HepG2 (cell line): ENCODE measurements at regions of chr6 and their contacts with region 1.

Region 1: GRCh38 chr6:70221025-70221714 is 81.7 kb downstream of the COL9A1 start:
- DNase-seq: peak; percentile 12
- ATAC-seq: peak; percentile 84
- H3K4me3 ChIP-seq: peak overlapping the region in 1 of 3 experiments; percentile 10; a peak in 1 of 6 replicates
- H3K27ac ChIP-seq: no peak overlapping the region
- H3K4me1 ChIP-seq: peaks cover 16% of the 10 kb centered on the region
- H3K27me3 ChIP-seq: peaks cover 0 to 4% of the 10 kb centered on the region in 2 experiments; a peak in 1 of 5 replicates
- CTCF ChIP-seq: peak; percentile 66
- EP300 ChIP-seq: no peak
- POLR2A ChIP-seq: no peak
- RAD21 ChIP-seq: 0 out of 2 replicates have a peak, but pooled peaks have one; percentile 35

Region 2: GRCh38 chr6:70246110-70246509 is 24.9 kb after region 1 on chr6:
- CTCF ChIA-PET with region 1: no interaction called
- POLR2A ChIA-PET with region 1: no interaction called
- in situ Hi-C with region 1: no loop called
- intact Hi-C with region 1: no loop called
- DNase-seq: no peak
- ATAC-seq: no peak
- H3K4me3 ChIP-seq: no peak overlapping the region
- H3K27ac ChIP-seq: no peak overlapping the region
- H3K4me1 ChIP-seq: peaks cover 15% of the 10 kb centered on the region
- H3K27me3 ChIP-seq: 0 out of 5 replicates have a peak, but pooled peaks cover 0 to 8% of the 10 kb centered on the region in 2 experiments
- CTCF ChIP-seq: no peak
- EP300 ChIP-seq: no peak
- POLR2A ChIP-seq: no peak
- RAD21 ChIP-seq: no peak

Region 3: GRCh38 chr6:70289299-70289698 is 68.1 kb after region 1 on chr6:
- CTCF ChIA-PET with region 1: interaction called, 4 read pairs
- POLR2A ChIA-PET with region 1: no interaction called
- in situ Hi-C with region 1: loop called (anchors 5 kb)
- intact Hi-C with region 1: loop called (anchors 1 kb)
- DNase-seq: peak; percentile 14
- ATAC-seq: peak; percentile 63
- H3K4me3 ChIP-seq: no peak overlapping the region
- H3K27ac ChIP-seq: no peak overlapping the region
- H3K4me1 ChIP-seq: no peaks in the 10 kb centered on the region
- H3K27me3 ChIP-seq: peaks cover 2 to 3% of the 10 kb centered on the region in 2 experiments; a peak in 3 of 5 replicates
- CTCF ChIP-seq: 0 out of 2 replicates have a peak, but pooled peaks have one; percentile 15
- EP300 ChIP-seq: no peak
- POLR2A ChIP-seq: no peak
- RAD21 ChIP-seq: no peak

Region 4: DNA sequence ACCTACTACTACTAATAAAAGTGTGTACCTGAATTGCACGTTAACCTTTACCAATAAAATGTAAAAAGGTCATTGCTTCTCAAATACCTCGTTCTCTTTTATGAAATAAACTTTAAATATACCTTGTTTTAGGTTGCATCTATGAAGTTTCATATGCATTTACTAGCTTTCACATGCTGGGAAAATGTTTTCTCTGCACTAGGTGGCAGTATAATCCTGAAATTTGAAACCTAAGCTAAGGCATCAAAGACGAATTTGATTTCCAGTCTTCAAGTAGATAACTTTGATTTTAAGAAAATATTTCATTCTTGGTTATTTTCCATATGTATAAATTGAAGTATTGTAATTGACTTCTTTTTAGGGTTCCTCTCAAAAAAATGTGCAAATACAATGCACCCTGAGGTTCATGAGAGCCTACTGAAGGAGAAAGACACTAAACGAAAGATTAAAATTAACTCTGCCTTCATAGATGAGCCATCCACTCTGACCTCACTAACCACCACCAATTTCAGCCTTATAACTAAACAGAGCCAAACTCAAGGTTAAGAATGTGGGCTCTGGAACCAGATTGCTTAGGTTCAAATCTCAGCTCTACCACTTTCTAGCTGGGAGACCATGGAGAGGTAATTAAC is 89.0 kb after region 1 on chr6:
- CTCF ChIA-PET with region 1: no interaction called
- POLR2A ChIA-PET with region 1: no interaction called
- in situ Hi-C with region 1: no loop called
- intact Hi-C with region 1: loop called (anchors 1 kb)
- DNase-seq: peak; percentile 33
- ATAC-seq: no peak
- H3K4me3 ChIP-seq: no peak overlapping the region
- H3K27ac ChIP-seq: no peak overlapping the region
- H3K4me1 ChIP-seq: no peaks in the 10 kb centered on the region
- H3K27me3 ChIP-seq: no peaks in the 10 kb centered on the region
- CTCF ChIP-seq: peak; percentile 68
- EP300 ChIP-seq: no peak
- POLR2A ChIP-seq: no peak
- RAD21 ChIP-seq: 0 out of 2 replicates have a peak, but pooled peaks have one; percentile 35